ENCODE measurements at regions of chr5 and their contacts with region 1.

Region 1: GRCh38 chr5:32232441-32233219 is 58.5 kb upstream of the GOLPH3 start:
- DNase-seq: peak; percentile 84
- ATAC-seq: peak; percentile 85
- H3K4me3 ChIP-seq: no peak overlapping the region
- H3K4me3 Mint-ChIP-seq: no peak overlapping the region
- H3K27ac ChIP-seq: peak overlapping the region in 1 of 2 donors; percentile 61
- H3K27ac Mint-ChIP-seq: peak overlapping the region; percentile 73
- H3K4me1 ChIP-seq: peaks cover 0 to 24% of the 10 kb centered on the region in 2 donors
- H3K4me1 Mint-ChIP-seq: peaks cover 21% of the 10 kb centered on the region
- H3K27me3 ChIP-seq: no peaks in the 10 kb centered on the region
- H3K27me3 Mint-ChIP-seq: no peaks in the 10 kb centered on the region
- CTCF ChIP-seq: peak; percentile 78

Region 2: DNA sequence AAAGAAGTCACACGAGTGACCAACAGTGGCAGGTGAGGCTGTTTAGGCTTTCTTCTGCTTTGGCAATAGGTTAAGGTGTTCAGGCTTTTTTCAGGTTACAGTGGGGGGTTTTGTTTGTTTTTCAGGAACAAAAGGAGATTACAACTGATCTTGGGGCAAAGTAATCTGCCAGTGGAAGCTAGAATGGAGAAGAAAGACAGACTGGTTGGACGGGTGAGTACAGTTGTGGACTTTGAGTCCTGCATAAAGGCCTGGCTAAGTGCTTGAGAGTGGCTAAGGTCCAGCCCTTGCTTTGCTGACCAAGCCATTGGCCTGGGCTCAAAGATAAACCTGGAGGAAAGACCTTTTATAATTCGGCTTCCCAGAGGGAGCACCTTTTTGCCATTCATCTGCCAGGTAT is 17.0 kb after region 1 on chr5:
- CTCF ChIA-PET with region 1: interaction called, 16 read pairs
- POLR2A ChIA-PET with region 1: no interaction called
- intact Hi-C with region 1: no loop called
- DNase-seq: no peak
- ATAC-seq: no peak
- H3K4me3 ChIP-seq: no peak overlapping the region
- H3K4me3 Mint-ChIP-seq: no peak overlapping the region
- H3K27ac ChIP-seq: no peak overlapping the region
- H3K27ac Mint-ChIP-seq: no peak overlapping the region
- H3K4me1 ChIP-seq: peaks cover 0 to 4% of the 10 kb centered on the region in 2 donors
- H3K4me1 Mint-ChIP-seq: peaks cover 11% of the 10 kb centered on the region
- H3K27me3 ChIP-seq: no peaks in the 10 kb centered on the region
- H3K27me3 Mint-ChIP-seq: no peaks in the 10 kb centered on the region
- CTCF ChIP-seq: no peak

Region 3: DNA sequence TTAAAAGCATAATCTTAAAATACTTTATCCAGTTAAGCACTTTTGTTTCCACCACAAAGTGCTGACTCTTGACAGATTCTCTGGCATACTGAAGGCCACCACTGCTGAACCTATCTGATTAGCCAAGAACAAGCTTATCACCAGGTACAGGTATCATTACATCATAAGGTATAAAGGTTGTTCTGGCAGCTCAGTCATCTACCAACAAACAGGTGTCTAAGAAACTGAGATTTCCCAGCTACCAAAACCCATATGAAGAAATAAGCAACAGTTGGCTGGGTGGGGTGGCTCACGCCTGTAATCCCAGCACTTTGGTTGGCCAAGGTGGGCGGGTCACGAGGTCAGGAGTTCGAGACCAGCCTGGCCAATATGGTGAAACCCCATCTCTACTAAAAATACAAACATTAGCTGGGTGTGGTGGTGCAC is 75.2 kb after region 1 on chr5:
- CTCF ChIA-PET with region 1: interaction called, 11 read pairs
- POLR2A ChIA-PET with region 1: interaction called, 3 read pairs
- intact Hi-C with region 1: loop called (anchors 5 kb)
- DNase-seq: no peak
- ATAC-seq: no peak
- H3K4me3 ChIP-seq: no peak overlapping the region
- H3K4me3 Mint-ChIP-seq: no peak overlapping the region
- H3K27ac ChIP-seq: no peak overlapping the region
- H3K27ac Mint-ChIP-seq: no peak overlapping the region
- H3K4me1 ChIP-seq: peaks cover 37 to 45% of the 10 kb centered on the region in 2 donors
- H3K4me1 Mint-ChIP-seq: peaks cover 67% of the 10 kb centered on the region
- H3K27me3 ChIP-seq: no peaks in the 10 kb centered on the region
- H3K27me3 Mint-ChIP-seq: no peaks in the 10 kb centered on the region
- CTCF ChIP-seq: no peak

Region 4: DNA sequence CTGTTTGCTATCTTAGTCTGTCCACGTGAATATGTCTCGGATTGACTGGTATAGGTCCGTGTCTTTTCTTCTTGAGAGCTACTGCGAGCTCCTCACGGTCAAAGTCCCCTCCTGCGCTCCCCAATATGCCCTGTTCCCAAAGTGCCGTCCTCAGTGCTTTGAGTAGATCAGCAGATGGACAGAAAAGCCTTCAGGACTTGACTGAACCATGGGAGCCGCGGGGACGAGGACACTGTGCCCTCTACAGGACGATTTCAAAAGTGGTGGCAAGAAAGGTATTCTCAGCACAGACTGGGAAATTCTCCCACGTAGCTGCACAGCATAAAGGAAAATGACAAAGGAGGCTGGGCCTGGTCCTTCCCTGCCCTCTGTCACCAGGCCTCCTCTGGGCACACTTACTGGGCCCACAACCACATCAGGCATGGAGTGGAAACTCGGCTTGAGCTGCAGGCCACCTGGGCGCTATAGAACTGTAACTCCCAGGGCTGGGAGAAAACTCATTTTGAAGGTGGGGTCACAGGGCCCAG is 96.7 kb after region 1 on chr5:
- CTCF ChIA-PET with region 1: interaction called, 289 read pairs
- POLR2A ChIA-PET with region 1: no interaction called
- intact Hi-C with region 1: no loop called
- DNase-seq: peak; percentile 71
- ATAC-seq: peak; percentile 84
- H3K4me3 ChIP-seq: no peak overlapping the region
- H3K4me3 Mint-ChIP-seq: no peak overlapping the region
- H3K27ac ChIP-seq: no peak overlapping the region
- H3K27ac Mint-ChIP-seq: no peak overlapping the region
- H3K4me1 ChIP-seq: no peaks in the 10 kb centered on the region
- H3K4me1 Mint-ChIP-seq: peaks cover 2% of the 10 kb centered on the region
- H3K27me3 ChIP-seq: no peaks in the 10 kb centered on the region
- H3K27me3 Mint-ChIP-seq: no peaks in the 10 kb centered on the region
- CTCF ChIP-seq: peak; percentile 74

Region 5: GRCh38 chr5:32613050-32613672 is 380.5 kb after region 1 on chr5:
- CTCF ChIA-PET with region 1: interaction called, 41 read pairs
- POLR2A ChIA-PET with region 1: no interaction called
- intact Hi-C with region 1: loop called (anchors 1 kb)
- DNase-seq: peak; percentile 81
- ATAC-seq: peak; percentile 77
- H3K4me3 ChIP-seq: no peak overlapping the region
- H3K4me3 Mint-ChIP-seq: no peak overlapping the region
- H3K27ac ChIP-seq: no peak overlapping the region
- H3K27ac Mint-ChIP-seq: peak overlapping the region; percentile 17
- H3K4me1 ChIP-seq: peaks cover 0 to 4% of the 10 kb centered on the region in 2 donors
- H3K4me1 Mint-ChIP-seq: peaks cover 3% of the 10 kb centered on the region
- H3K27me3 ChIP-seq: no peaks in the 10 kb centered on the region
- H3K27me3 Mint-ChIP-seq: no peaks in the 10 kb centered on the region
- CTCF ChIP-seq: peak; percentile 98

Measured in B cell (primary cell).